Naive thymus-derived CD4-positive, alpha-beta T cell (primary cell): ENCODE measurements at regions of chr2 and their contacts with region 1.

Region 1: GRCh38 chr2:85327822-85328617 is at the start of gene TGOLN2:
- DNase-seq: peak; percentile 91 to 96 (median 95)
- ATAC-seq: peak; percentile 94
- H3K4me3 ChIP-seq: peak within 1 kb of the TSS; percentile 84
- H3K4me3 Mint-ChIP-seq: peak within 1 kb of the TSS; percentile 97 to 100 (median 99)
- H3K27ac ChIP-seq: peak within 1 kb of the TSS; percentile 92
- H3K27ac Mint-ChIP-seq: peak within 1 kb of the TSS; percentile 97 to 100 (median 99)
- H3K4me1 ChIP-seq: peaks cover 24 to 31% of the 10 kb centered on the region in 2 donors
- H3K4me1 Mint-ChIP-seq: peaks cover 31 to 51% (median 46%) of the 10 kb centered on the region in 7 donors
- H3K27me3 ChIP-seq: no peaks in the 10 kb centered on the region
- H3K27me3 Mint-ChIP-seq: no peaks in the 10 kb centered on the region
- total RNA-seq, gene TGOLN2: 144 to 200 (median 178) TPM

Region 2: GRCh38 chr2:85302121-85302520 is 25.9 kb before region 1 on chr2:
- CTCF ChIA-PET with region 1: interaction called, 4 read pairs
- POLR2A ChIA-PET with region 1: interaction called, 220 read pairs
- intact Hi-C with region 1: no loop called
- DNase-seq: no peak
- ATAC-seq: no peak
- H3K4me3 ChIP-seq: no peak overlapping the region
- H3K4me3 Mint-ChIP-seq: no peak overlapping the region
- H3K27ac ChIP-seq: no peak overlapping the region
- H3K27ac Mint-ChIP-seq: no peak overlapping the region
- H3K4me1 ChIP-seq: no peaks in the 10 kb centered on the region
- H3K4me1 Mint-ChIP-seq: peaks cover 7 to 22% (median 14%) of the 10 kb centered on the region in 7 donors
- H3K27me3 ChIP-seq: no peaks in the 10 kb centered on the region
- H3K27me3 Mint-ChIP-seq: peaks cover 0 to 23% (median 0%) of the 10 kb centered on the region in 5 donors

Region 3: GRCh38 chr2:85354286-85355072 is 26.5 kb after region 1 on chr2 and contains the starts of genes ELMOD3 and RETSAT:
- CTCF ChIA-PET with region 1: interaction called, 6 read pairs
- POLR2A ChIA-PET with region 1: interaction called, 211 read pairs
- intact Hi-C with region 1: loop called (anchors 1 kb)
- DNase-seq: peak; percentile 79 to 99 (median 98)
- ATAC-seq: peak; percentile 99
- H3K4me3 ChIP-seq: peak within 1 kb of the TSS; percentile 86
- H3K4me3 Mint-ChIP-seq: peak within 1 kb of the TSS; percentile 91 to 100 (median 100)
- H3K27ac ChIP-seq: peak within 1 kb of the TSS; percentile 89
- H3K27ac Mint-ChIP-seq: peak within 1 kb of the TSS; percentile 93 to 100 (median 99)
- H3K4me1 ChIP-seq: peaks cover 19 to 28% of the 10 kb centered on the region in 2 donors
- H3K4me1 Mint-ChIP-seq: peaks cover 36 to 61% (median 53%) of the 10 kb centered on the region in 7 donors
- H3K27me3 ChIP-seq: no peaks in the 10 kb centered on the region
- H3K27me3 Mint-ChIP-seq: no peaks in the 10 kb centered on the region
- total RNA-seq, gene ELMOD3: 20.2 to 33.3 (median 21.7) TPM
- total RNA-seq, gene RETSAT: 18.5 to 30.5 (median 20.2) TPM

Region 4: DNA sequence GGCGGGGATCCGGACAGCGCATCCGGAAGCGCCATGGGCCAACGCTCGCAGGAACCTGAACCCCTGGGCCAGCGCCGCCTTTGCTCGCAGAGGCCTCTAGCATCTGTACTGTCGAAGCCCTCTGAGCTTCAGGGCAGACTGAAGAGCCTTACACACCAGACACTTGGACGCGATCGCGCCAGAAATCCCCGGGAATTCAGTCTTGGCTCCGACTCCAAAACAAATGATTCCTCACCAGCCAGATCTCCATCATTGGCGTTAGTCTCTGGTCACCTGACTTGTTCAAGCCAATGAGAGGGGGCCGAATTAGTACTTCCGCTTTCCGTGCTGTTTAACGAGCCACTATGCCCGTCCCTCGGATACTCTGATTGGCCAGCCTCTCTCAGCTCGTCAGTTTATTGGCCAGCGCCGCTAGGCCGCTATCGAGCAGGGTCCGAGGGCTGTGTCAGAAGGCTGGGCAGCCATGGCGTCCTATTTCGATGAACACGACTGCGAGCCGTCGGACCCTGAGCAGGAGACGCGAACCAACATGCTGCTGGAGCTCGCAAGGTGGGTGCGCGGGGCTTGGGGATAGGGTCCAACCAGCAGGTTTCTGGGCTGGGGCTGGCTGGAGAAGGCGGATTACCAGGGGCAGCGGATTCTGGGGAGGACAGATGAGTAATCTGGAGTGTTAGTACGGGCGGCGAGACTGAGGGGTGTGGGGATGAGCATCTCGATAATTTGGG is 267.4 kb after region 1 on chr2 and contains the start of gene RNF181:
- CTCF ChIA-PET with region 1: no interaction called
- POLR2A ChIA-PET with region 1: interaction called, 10 read pairs
- intact Hi-C with region 1: loop called in 1 of 2 experiments (anchors 1 kb)
- DNase-seq: peak; percentile 65 to 95 (median 90)
- ATAC-seq: peak; percentile 99
- H3K4me3 ChIP-seq: peak within 1 kb of the TSS; percentile 89
- H3K4me3 Mint-ChIP-seq: peak within 1 kb of the TSS; percentile 93 to 100 (median 98)
- H3K27ac ChIP-seq: peak within 1 kb of the TSS; percentile 88
- H3K27ac Mint-ChIP-seq: peak within 1 kb of the TSS; percentile 93 to 99 (median 97)
- H3K4me1 ChIP-seq: peaks cover 15 to 16% of the 10 kb centered on the region in 2 donors
- H3K4me1 Mint-ChIP-seq: peaks cover 25 to 48% (median 35%) of the 10 kb centered on the region in 7 donors
- H3K27me3 ChIP-seq: no peaks in the 10 kb centered on the region
- H3K27me3 Mint-ChIP-seq: no peaks in the 10 kb centered on the region
- total RNA-seq, gene RNF181: 38.5 to 118 (median 61.4) TPM

Region 5: DNA sequence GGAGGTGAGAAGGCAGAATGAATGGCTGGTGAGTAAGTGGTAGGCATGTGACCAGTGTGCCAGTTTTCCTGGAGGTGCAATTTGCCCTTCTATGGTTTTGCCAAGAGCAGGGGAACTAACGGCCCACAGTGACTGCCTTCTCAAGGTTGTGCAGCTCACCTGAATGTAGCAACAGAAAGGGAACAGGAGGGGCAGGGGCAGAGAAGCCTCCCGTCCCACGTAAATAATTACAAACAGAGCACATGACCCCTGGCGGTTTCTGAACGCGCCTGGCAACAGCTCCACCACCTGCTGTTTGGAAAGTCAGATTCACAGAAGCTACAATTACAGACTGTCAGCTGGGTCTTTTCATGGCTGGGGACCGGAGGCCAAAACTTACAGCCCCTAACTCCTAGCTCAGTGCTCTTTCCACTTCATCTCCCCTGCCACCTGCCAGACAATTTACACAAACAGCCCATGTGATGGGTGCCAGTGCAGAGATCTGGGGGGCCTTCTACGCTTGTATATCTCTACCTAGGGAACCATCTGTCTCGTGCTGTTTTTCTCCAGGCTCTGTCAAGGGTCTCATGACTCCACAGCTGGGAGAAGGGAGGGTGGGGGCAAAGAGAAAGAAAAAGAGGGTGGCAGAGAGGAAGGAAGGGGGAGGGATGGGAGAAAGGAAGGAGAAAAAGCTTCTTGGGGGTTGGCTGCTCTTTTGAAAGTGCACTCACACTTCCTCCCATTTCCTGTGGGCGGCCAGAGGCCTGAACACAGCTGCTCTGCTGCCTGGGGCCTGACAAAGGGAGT is 708.1 kb after region 1 on chr2:
- CTCF ChIA-PET with region 1: no interaction called
- POLR2A ChIA-PET with region 1: no interaction called
- intact Hi-C with region 1: loop called in 1 of 2 experiments (anchors 10 kb)
- DNase-seq: peak in 8 of 9 donors; percentile 63 to 89 (median 84)
- ATAC-seq: peak; percentile 65
- H3K4me3 ChIP-seq: peak overlapping the region; percentile 48
- H3K4me3 Mint-ChIP-seq: peak overlapping the region; percentile 80 to 88 (median 86)
- H3K27ac ChIP-seq: peak overlapping the region; percentile 88
- H3K27ac Mint-ChIP-seq: peak overlapping the region; percentile 94 to 100 (median 100)
- H3K4me1 ChIP-seq: peaks cover 55 to 84% of the 10 kb centered on the region in 2 donors
- H3K4me1 Mint-ChIP-seq: peaks cover 57 to 92% (median 88%) of the 10 kb centered on the region in 7 donors
- H3K27me3 ChIP-seq: no peaks in the 10 kb centered on the region
- H3K27me3 Mint-ChIP-seq: peaks cover 0 to 5% (median 0%) of the 10 kb centered on the region in 5 donors